H1 (cell line): ENCODE measurements at regions of chr9 and their contacts with region 1.

Region 1: GRCh38 chr9:128845155-128845931 is 15.7 kb upstream of the SPOUT1 start:
- DNase-seq: no peak
- H3K4me3 ChIP-seq: no peak overlapping the region
- H3K27ac ChIP-seq: no peak overlapping the region
- H3K4me1 ChIP-seq: no peaks in the 10 kb centered on the region
- H3K27me3 ChIP-seq: no peaks in the 10 kb centered on the region
- CTCF ChIP-seq: peak; percentile 32 to 44 (median 42); a peak in 3 of 4 replicates
- EP300 ChIP-seq: no peak
- POLR2A ChIP-seq: no peak
- RAD21 ChIP-seq: peak; percentile 10 to 18; a peak in 1 of 4 replicates

Region 2: GRCh38 chr9:128863647-128864046 is 18.3 kb after region 1 on chr9:
- CTCF ChIA-PET with region 1: interaction called, 10 read pairs
- POLR2A ChIA-PET with region 1: no interaction called
- DNase-seq: peak; percentile 87 to 99
- H3K4me3 ChIP-seq: no peak overlapping the region
- H3K27ac ChIP-seq: no peak overlapping the region; the same call in 1 of the 2 replicates
- H3K4me1 ChIP-seq: peaks cover 0 to 5% (median 2%) of the 10 kb centered on the region in 4 experiments; a peak in 4 of 7 replicates
- H3K27me3 ChIP-seq: no peaks in the 10 kb centered on the region
- CTCF ChIP-seq: peak; percentile 94 to 99 (median 99)
- EP300 ChIP-seq: no peak
- POLR2A ChIP-seq: no peak
- RAD21 ChIP-seq: peak; percentile 76 to 86